ENCODE measurements at regions of chr3 and their contacts with region 1.

Region 1: DNA sequence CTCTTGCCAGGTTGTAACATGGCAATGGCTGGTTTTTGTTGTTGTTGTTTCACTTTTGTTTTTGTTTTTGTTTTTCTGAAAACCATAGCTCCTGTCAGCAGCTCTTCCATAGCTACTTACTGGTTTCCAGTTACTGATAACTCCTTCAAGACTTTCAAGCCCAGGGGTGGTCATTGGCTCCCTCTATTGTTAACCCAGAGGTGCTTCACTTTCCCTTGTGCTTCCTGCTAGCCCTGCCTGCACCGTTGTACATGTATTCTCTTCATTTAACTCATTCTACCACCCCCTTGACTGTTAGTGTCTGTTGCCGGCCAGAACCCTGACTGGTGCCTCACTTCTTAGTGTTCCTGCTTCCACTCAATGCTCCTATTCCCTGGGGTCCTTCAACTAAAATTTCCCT is 4.2 kb upstream of the TRAT1 start:
- DNase-seq: peak; percentile 86
- H3K4me3 Mint-ChIP-seq: peak overlapping the region; percentile 48
- H3K27ac Mint-ChIP-seq: peak overlapping the region; percentile 79
- H3K4me1 Mint-ChIP-seq: peaks cover 24% of the 10 kb centered on the region
- H3K27me3 Mint-ChIP-seq: no peaks in the 10 kb centered on the region

Region 2: GRCh38 chr3:107522510-107523288 is 1295.7 kb before region 1 on chr3 and contains the start of gene BBX:
- CTCF ChIA-PET with region 1: no interaction called
- intact Hi-C with region 1: loop called (anchors 10 kb)
- DNase-seq: peak; percentile 94
- H3K4me3 Mint-ChIP-seq: peak within 1 kb of the TSS; percentile 92
- H3K27ac Mint-ChIP-seq: peak within 1 kb of the TSS; percentile 94
- H3K4me1 Mint-ChIP-seq: peaks cover 23% of the 10 kb centered on the region
- H3K27me3 Mint-ChIP-seq: no peaks in the 10 kb centered on the region
- total RNA-seq, gene BBX: 43.1 to 48.6 TPM

Region 3: GRCh38 chr3:108221911-108222852 is 596.2 kb before region 1 on chr3 and contains the start of gene IFT57:
- CTCF ChIA-PET with region 1: no interaction called
- intact Hi-C with region 1: loop called (anchors 2 kb)
- DNase-seq: peak; percentile 95
- H3K4me3 Mint-ChIP-seq: peak within 1 kb of the TSS; percentile 97
- H3K27ac Mint-ChIP-seq: peak within 1 kb of the TSS; percentile 97
- H3K4me1 Mint-ChIP-seq: peaks cover 42% of the 10 kb centered on the region
- H3K27me3 Mint-ChIP-seq: no peaks in the 10 kb centered on the region
- total RNA-seq, gene IFT57: 26.2 to 27.7 TPM

Region 4: DNA sequence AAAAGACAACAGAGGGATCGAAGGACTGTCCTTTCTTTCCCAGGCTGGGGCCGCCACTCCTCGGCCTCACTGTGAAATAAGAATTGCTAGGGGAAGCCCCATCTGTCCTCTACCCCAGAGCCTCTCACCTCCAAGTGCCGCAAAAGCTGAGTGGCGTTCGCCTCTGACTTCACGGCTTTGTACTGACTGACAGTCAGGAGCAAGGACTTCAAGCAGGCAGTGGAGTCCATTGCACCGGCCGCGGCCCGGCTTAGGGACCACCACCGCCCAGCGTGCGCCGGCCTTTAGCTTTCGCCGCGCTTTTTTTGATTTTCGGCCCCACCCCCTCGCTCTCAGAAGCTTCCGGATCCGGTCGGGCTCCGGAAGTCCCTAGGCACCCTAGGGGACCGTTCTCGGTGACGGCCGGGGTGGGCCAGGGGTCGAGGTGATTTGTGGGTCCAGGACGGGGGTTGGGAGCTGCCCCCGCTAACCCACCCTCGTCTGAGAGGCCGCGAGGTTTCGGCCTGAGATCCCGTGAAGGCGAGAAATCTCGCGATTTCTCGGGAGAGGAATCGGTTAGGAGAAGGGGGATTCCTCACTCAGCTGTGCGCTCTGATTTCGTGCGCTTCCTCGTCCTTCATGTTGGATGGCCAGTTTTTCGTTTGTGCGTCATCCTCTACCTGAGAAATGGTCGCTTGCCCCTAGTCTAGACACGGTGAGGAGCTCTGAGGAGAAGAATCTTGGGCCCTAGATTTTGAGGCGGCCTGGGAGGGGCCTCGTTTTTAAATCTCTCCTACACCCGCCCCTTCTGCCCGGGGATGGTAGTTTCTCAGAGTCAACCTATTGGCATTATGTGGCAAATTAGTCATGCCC is 229.0 kb before region 1 on chr3 and contains the starts of genes CIP2A and DZIP3:
- CTCF ChIA-PET with region 1: interaction called, 3 read pairs
- intact Hi-C with region 1: loop called (anchors 1 kb)
- DNase-seq: peak; percentile 84
- H3K4me3 Mint-ChIP-seq: peak within 1 kb of the TSS; percentile 95
- H3K27ac Mint-ChIP-seq: peak within 1 kb of the TSS; percentile 99
- H3K4me1 Mint-ChIP-seq: peaks cover 36% of the 10 kb centered on the region
- H3K27me3 Mint-ChIP-seq: no peaks in the 10 kb centered on the region
- total RNA-seq, gene CIP2A: 34.7 to 39.9 TPM
- total RNA-seq, gene DZIP3: 11.2 to 12.2 TPM

Region 5: DNA sequence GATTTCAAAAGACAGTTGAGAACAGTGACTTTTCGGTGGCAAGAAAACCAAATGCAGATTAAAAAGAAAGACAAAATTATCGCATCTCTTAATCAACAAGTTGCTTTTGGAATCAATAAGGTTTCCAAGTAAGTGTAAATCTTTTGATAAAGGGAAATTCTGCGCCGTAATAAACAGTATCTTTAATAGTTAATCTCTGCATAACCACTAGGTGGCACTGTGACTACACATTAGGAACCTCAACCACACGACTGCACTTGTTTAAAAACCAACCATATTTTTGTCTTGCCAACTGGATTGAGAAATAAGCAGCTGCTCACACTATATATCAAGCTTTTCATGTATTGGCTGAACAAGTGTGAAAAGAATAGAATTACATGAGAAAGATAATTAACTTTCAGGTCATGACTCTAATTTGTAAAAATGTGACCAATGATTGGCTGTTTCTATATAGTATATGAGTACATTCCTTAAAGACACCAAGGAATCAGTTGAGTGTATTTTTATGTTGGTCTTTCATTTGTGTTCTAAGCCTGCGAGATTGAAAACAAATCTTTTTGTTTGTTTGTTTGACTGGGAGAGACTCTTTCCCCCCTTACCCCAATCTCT is 156.2 kb before region 1 on chr3:
- CTCF ChIA-PET with region 1: interaction called, 71 read pairs
- intact Hi-C with region 1: loop called (anchors 1 kb)
- DNase-seq: peak; percentile 63
- H3K4me3 Mint-ChIP-seq: no peak overlapping the region
- H3K27ac Mint-ChIP-seq: no peak overlapping the region
- H3K4me1 Mint-ChIP-seq: peaks cover 12% of the 10 kb centered on the region
- H3K27me3 Mint-ChIP-seq: no peaks in the 10 kb centered on the region

Region 6: DNA sequence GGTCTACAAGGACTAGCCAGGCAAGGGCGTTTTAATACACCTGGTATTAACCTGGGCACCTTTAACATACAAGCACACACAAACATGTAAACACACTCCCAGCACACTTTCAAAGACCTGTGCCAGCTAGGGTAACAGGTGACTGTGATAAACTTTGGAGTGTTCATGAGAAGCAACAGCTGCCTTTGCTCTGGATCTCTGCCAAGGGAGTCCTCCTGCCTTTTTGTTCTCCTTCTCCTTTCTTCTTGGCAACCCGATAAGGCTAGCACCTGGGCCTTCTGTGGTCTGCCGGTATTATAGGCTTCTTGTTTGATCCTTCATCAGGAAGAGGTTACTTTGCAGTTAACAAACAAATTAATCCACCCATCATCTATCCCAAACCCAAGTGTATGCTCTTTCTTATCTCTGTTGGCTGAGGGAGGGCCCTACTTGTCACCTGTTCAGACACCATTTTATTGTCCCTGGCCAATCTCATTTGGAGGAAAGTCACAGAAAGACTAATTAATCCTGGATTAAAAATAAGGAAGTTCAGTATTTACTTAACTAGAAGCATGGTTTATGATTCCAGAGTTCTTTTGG is 60.9 kb before region 1 on chr3 and contains the start of gene RETNLB:
- CTCF ChIA-PET with region 1: interaction called, 6 read pairs
- intact Hi-C with region 1: loop called (anchors 5 kb)
- DNase-seq: no peak
- H3K4me3 Mint-ChIP-seq: no peak within 1 kb of the TSS
- H3K27ac Mint-ChIP-seq: no peak within 1 kb of the TSS
- H3K4me1 Mint-ChIP-seq: peaks cover 5% of the 10 kb centered on the region
- H3K27me3 Mint-ChIP-seq: no peaks in the 10 kb centered on the region
- total RNA-seq, gene RETNLB: not detected

Region 7: GRCh38 chr3:108862865-108863798 is 44.7 kb after region 1 on chr3:
- CTCF ChIA-PET with region 1: no interaction called
- intact Hi-C with region 1: loop called (anchors 1 kb)
- DNase-seq: peak; percentile 79
- H3K4me3 Mint-ChIP-seq: peak overlapping the region; percentile 63
- H3K27ac Mint-ChIP-seq: peak overlapping the region; percentile 100
- H3K4me1 Mint-ChIP-seq: peaks cover 51% of the 10 kb centered on the region
- H3K27me3 Mint-ChIP-seq: no peaks in the 10 kb centered on the region